Psoas muscle (tissue), 8 donors: ENCODE measurements at regions of chr15 and their contacts with region 1.

Region 1: DNA sequence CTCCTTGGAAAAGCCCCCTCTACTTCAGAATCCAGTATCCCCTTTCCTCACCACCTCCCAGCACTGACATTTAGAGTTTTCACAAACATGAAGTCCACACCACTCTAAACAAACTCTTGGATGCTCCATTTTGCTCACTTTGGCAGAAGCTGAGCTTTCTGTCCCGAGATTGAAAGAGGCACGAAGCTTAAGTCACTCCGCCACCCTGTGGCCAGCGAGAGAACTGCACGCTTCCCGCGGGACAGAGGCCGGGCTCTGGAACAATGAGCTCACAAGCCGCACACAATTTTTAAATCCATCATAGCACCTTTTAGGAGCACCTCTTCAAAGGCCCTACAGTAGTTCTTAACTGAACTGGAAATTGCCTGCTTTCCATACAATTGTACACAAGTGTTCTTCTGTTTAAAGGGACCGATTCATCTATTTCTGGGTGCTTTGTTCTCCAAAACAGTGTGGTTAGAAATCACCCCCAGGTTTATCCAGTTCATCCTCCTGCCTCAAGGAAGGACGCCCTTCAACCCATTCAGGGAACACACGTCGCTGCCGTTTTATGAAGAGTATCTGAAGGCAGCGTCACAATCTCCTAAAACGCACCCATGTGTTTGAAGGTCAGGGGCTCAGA is 226.1 kb downstream of the VPS13C start:
- DNase-seq: peak; percentile 82 to 89
- ATAC-seq: peak; percentile 76 to 91 (median 84)
- H3K4me3 ChIP-seq: no peak overlapping the region
- H3K27ac ChIP-seq: no peak overlapping the region
- H3K4me1 ChIP-seq: no peaks in the 10 kb centered on the region
- H3K27me3 ChIP-seq: no peaks in the 10 kb centered on the region
- CTCF ChIP-seq: peak; percentile 99

Region 2: DNA sequence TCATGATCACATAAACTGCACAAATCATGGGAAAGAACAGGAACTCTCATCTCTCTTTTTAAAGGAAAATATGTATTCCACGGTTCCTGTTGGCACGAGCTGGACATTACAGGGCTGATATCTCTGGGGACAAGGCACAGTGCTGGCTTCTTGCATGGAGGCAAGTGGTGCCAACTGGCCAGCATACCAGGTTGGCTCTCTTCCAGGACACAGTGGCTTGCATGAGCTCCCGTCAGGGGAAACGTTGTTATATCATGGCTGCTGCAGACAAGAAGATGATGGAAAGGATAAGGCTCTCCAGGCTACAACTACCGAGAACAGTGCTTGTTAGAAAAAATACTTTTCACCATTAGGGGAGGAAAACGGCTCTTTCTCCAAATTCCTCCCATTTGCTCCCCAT is 889.0 kb before region 1 on chr15:
- intact Hi-C with region 1: loop called in 1 of 2 experiments (anchors 10 kb)
- DNase-seq: peak; percentile 71 to 86
- ATAC-seq: peak; percentile 82 to 92 (median 86)
- H3K4me3 ChIP-seq: no peak overlapping the region
- H3K27ac ChIP-seq: no peak overlapping the region
- H3K4me1 ChIP-seq: peaks cover 43% of the 10 kb centered on the region
- H3K27me3 ChIP-seq: no peaks in the 10 kb centered on the region
- CTCF ChIP-seq: no peak

Region 3: DNA sequence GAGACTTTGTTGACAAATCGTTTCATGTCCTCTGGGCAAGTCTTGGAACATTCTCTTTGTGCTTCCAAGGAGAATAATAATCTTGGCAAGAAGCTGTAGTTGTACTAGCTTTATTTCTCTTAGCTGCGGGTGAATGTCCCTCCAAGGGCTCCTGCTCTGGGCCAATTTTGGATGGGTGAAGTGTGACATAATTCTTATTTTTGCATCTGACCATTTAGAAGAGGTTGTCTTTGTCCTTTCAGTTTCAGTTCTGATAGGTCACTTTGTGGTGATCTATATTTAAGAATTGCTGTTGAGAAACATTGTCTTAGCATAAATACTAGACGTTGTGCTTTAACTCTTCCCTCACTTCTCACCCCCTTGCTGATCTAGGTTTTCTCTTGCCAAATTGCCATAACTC is 440.2 kb before region 1 on chr15:
- intact Hi-C with region 1: loop called in 1 of 2 experiments (anchors 10 kb)
- DNase-seq: peak in 1 of 2 donors; percentile 58
- ATAC-seq: peak; percentile 80 to 92 (median 88)
- H3K4me3 ChIP-seq: peak overlapping the region; percentile 49
- H3K27ac ChIP-seq: peak overlapping the region; percentile 61
- H3K4me1 ChIP-seq: peaks cover 17% of the 10 kb centered on the region
- H3K27me3 ChIP-seq: no peaks in the 10 kb centered on the region
- CTCF ChIP-seq: no peak

Region 4: GRCh38 chr15:61621146-61621545 is 213.0 kb before region 1 on chr15:
- intact Hi-C with region 1: loop called in 1 of 2 experiments (anchors 5 kb)
- DNase-seq: peak; percentile 30 to 60
- ATAC-seq: peak; percentile 54 to 70 (median 68)
- H3K4me3 ChIP-seq: no peak overlapping the region
- H3K27ac ChIP-seq: no peak overlapping the region
- H3K4me1 ChIP-seq: peaks cover 13% of the 10 kb centered on the region
- H3K27me3 ChIP-seq: no peaks in the 10 kb centered on the region
- CTCF ChIP-seq: peak; percentile 60

Region 5: GRCh38 chr15:61890106-61890505 is 55.9 kb after region 1 on chr15:
- intact Hi-C with region 1: no loop called
- DNase-seq: no peak
- ATAC-seq: no peak
- H3K4me3 ChIP-seq: no peak overlapping the region
- H3K27ac ChIP-seq: no peak overlapping the region
- H3K4me1 ChIP-seq: no peaks in the 10 kb centered on the region
- H3K27me3 ChIP-seq: no peaks in the 10 kb centered on the region
- CTCF ChIP-seq: no peak